ENCODE measurements at regions of chr7 and their contacts with region 1.

Region 1: DNA sequence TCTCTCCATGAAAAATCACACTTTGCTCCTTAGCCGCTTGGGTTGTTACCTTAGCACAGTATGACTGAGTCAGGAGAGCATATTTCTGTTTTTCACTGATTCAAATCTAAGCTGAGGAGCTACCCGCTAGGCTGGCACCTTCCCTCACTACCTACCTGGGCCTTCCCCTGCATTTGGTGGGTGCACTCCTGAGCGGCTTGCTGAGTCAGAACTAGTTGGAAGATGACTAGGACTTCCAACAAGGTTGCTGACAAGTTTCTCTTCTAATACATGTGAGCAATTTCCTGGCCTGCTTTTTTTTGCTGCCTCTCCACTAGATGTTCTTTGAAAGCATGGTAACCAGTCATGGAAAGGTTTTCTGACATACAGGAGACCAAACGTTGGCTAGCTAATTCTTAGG is 43.8 kb upstream of the SEC61G start:
- DNase-seq: no peak

Region 2: GRCh38 chr7:54326592-54327167 is 476.2 kb before region 1 on chr7:
- intact Hi-C with region 1: no loop called
- DNase-seq: no peak

Region 3: DNA sequence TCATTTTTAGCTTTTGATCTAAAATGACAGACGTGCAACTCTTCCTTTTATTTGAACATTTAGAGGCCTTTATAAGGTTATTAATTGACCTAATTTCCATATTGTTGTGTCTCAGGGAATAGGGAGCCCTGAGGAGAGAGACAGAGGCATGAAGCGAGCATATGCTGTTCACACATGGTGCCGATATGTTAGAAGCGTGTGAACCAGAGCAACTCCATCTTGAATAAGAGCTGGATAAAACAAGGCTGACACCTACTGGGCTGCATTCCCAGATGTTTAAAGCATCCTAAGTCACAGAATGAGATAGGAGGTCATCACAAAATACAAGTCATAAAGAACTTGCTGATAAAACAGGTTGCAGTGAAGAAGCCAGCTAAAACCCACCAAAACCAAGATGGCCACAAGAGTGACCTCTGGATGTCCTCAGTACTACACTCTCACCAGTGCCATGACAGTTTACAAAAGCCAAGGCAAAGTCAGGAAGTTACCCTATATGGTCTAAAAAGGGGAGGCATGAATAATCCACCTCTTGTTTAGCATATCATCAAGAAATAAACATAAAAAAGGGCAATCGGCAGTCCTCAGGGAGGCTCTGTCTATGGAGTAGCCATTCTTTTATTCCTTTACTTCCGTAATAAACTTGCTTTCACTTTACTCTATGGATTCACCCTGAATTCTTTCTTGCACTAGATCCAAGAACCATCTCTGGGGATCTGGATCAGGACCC is 123.9 kb before region 1 on chr7:
- intact Hi-C with region 1: no loop called
- DNase-seq: no peak

Region 4: DNA sequence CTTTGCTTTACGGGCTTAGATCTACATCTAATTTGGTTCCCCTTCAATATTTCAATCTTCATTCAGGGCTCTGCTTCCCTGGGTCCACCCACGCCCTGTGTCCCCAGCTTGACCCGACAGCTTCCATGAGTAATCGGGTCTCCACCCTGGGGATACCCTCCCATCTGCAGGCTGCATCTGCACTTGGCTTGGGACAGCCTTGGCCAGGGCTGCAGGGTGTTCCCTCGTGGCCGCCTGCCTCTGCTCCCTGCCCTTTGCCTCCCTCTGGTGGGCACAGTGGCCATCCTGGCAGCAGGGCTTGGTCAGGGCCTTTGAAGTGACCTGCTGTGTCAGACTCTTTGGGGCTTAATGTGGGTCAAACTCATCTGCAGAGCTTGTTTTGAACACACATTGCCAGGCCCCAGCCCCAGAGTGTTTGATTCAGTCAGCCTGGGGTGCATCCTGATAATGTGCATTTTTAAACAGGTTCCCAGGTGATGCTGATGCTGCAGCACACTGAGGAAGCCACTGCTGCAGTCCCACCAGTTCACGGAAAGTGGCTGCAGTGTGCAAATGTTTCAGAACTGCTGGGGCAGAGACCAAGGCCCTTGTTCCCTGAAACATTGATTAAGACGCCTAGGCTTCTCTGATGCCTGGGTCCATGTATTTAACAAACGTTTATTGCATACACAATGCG is 36.8 kb after region 1 on chr7:
- intact Hi-C with region 1: loop called in 1 of 2 experiments (anchors 5 kb)
- DNase-seq: peak; percentile 92

Region 5: GRCh38 chr7:55173671-55174070 is 370.8 kb after region 1 on chr7:
- intact Hi-C with region 1: no loop called
- DNase-seq: no peak

Measured in posterior vena cava (tissue), 2 donors.